Psoas muscle (tissue), 8 donors: ENCODE measurements at regions of chr2 and their contacts with region 1.

Region 1: DNA sequence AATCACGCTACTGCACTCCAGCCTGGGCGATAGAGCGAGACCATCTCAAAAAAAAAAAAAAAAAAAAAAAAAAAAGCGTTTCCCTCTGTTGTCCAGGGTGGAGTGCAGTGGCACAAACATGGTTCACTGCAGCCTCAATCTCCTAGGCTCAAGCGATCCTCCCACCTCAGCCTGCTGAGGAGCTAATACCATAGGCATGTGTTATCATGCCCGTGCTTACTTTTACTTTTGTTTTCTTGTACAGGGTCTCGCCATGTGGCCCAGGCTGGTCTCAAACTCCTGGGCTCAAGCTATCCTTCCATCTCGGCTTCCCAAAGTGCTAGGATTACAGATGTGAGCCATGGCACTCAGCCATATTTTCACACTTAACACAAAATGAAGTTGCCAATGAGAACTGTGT is 37.5 kb downstream of the PSME4 start:
- DNase-seq: no peak
- ATAC-seq: no peak
- H3K4me3 ChIP-seq: no peak overlapping the region
- H3K27ac ChIP-seq: no peak overlapping the region
- H3K4me1 ChIP-seq: peaks cover 3% of the 10 kb centered on the region
- H3K27me3 ChIP-seq: no peaks in the 10 kb centered on the region
- CTCF ChIP-seq: no peak

Region 2: GRCh38 chr2:53886406-53887280 is 46.7 kb before region 1 on chr2:
- intact Hi-C with region 1: loop called (anchors 5 kb)
- DNase-seq: no peak
- ATAC-seq: no peak
- H3K4me3 ChIP-seq: no peak overlapping the region
- H3K27ac ChIP-seq: no peak overlapping the region
- H3K4me1 ChIP-seq: no peaks in the 10 kb centered on the region
- H3K27me3 ChIP-seq: no peaks in the 10 kb centered on the region
- CTCF ChIP-seq: no peak

Region 3: GRCh38 chr2:53896864-53897263 is 36.5 kb before region 1 on chr2:
- intact Hi-C with region 1: loop called in 1 of 2 experiments (anchors 5 kb)
- DNase-seq: no peak
- ATAC-seq: peak; percentile 86 to 97 (median 95)
- H3K4me3 ChIP-seq: no peak overlapping the region
- H3K27ac ChIP-seq: peak overlapping the region; percentile 73
- H3K4me1 ChIP-seq: no peaks in the 10 kb centered on the region
- H3K27me3 ChIP-seq: no peaks in the 10 kb centered on the region
- CTCF ChIP-seq: no peak

Region 4: GRCh38 chr2:55252832-55253231 is 1319.5 kb after region 1 on chr2:
- intact Hi-C with region 1: loop called in 1 of 2 experiments (anchors 10 kb)
- DNase-seq: no peak
- ATAC-seq: no peak
- H3K4me3 ChIP-seq: no peak overlapping the region
- H3K27ac ChIP-seq: no peak overlapping the region
- H3K4me1 ChIP-seq: no peaks in the 10 kb centered on the region
- H3K27me3 ChIP-seq: no peaks in the 10 kb centered on the region
- CTCF ChIP-seq: no peak